T-cell (primary cell): ENCODE measurements at regions of chr1 and their contacts with region 1.

Region 1: DNA sequence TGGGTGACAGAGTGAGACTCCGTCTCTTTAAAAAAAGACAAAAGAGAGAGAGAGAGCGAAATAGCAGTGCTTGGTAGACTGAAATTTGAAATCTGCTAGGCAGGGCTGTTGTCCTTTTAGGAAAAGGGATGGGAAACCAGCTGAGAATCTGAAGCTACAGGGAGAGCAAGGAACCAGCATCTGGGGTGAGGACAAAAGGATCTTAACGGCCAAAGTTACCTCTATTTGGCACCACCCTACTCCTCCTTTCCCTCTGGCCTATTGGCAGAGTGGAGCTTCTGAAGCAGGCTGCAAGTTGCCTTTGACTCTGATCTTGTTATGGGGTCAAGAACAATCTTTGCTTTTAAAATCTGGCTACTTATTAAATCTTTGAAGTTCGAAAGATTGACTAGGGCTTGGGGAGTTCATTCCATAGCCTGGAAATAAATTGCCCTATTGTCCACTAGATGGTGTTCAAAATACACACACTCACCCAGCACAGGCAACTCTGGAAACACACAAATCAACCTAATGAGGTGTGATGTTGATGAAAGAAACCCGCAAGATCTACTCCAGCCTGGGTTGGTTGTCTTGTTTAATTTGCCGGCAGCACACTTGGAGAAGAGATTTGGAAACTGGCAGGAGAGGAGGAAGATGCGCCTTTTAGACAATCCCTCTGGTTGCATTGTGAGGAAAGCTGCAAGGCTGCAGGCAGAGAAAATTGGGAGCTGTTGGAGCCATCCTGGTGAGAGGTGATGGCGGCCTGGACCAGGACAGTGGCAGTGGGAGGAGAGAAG is 16.5 kb upstream of the PARP1 start:
- DNase-seq: peak in 1 of 35 experiments; percentile 62
- ATAC-seq: peak; percentile 52 to 64 (median 60)
- H3K4me3 ChIP-seq: no peak overlapping the region
- H3K4me3 Mint-ChIP-seq: no peak overlapping the region
- H3K27ac ChIP-seq: no peak overlapping the region
- H3K27ac Mint-ChIP-seq: no peak overlapping the region
- H3K4me1 ChIP-seq: peaks cover 11 to 51% of the 10 kb centered on the region in 2 experiments
- H3K4me1 Mint-ChIP-seq: peaks cover 24 to 26% (median 25%) of the 10 kb centered on the region in 3 donors
- H3K27me3 ChIP-seq: peaks cover 0 to 5% of the 10 kb centered on the region in 2 experiments
- H3K27me3 Mint-ChIP-seq: peaks cover 0 to 1% of the 10 kb centered on the region in 2 donors

Region 2: DNA sequence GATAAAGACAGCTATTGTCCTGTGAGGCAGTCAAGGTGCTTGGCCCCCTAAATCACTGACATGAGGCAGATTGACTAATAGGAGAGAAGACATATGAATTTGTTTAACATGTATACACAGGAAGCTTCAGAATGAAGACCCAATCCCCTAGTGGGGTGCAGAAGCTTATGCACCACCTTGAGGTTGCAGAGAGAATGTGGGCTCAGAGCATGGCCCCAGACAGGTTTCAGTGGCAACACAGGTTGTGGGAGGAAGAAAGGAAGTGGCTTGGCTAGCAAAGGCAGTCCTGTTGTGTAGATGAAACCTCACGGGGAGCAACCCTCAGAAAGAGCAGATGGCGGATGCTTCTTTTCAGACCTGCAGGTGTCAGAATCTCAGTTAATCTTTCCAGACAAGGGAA is 20.5 kb after region 1 on chr1:
- CTCF ChIA-PET with region 1: interaction called, 6 to 23 read pairs
- POLR2A ChIA-PET with region 1: interaction called in 1 of 2 experiments, 3 read pairs
- DNase-seq: peak; percentile 44 to 86 (median 69)
- ATAC-seq: peak; percentile 99 to 100 (median 100)
- H3K4me3 ChIP-seq: no peak overlapping the region
- H3K4me3 Mint-ChIP-seq: peak overlapping the region in 1 of 3 donors; percentile 49
- H3K27ac ChIP-seq: peak overlapping the region; percentile 28
- H3K27ac Mint-ChIP-seq: peak overlapping the region; percentile 74 to 89
- H3K4me1 ChIP-seq: peaks cover 28 to 30% of the 10 kb centered on the region in 2 experiments
- H3K4me1 Mint-ChIP-seq: peaks cover 33 to 36% (median 35%) of the 10 kb centered on the region in 3 donors
- H3K27me3 ChIP-seq: no peaks in the 10 kb centered on the region
- H3K27me3 Mint-ChIP-seq: no peaks in the 10 kb centered on the region

Region 3: GRCh38 chr1:226604560-226605317 is 180.3 kb after region 1 on chr1:
- CTCF ChIA-PET with region 1: interaction called in 1 of 2 experiments, 14 read pairs
- POLR2A ChIA-PET with region 1: no interaction called
- DNase-seq: no peak
- ATAC-seq: no peak
- H3K4me3 ChIP-seq: no peak overlapping the region
- H3K4me3 Mint-ChIP-seq: no peak overlapping the region
- H3K27ac ChIP-seq: no peak overlapping the region
- H3K27ac Mint-ChIP-seq: no peak overlapping the region
- H3K4me1 ChIP-seq: peaks cover 0 to 3% of the 10 kb centered on the region in 2 experiments
- H3K4me1 Mint-ChIP-seq: no peaks in the 10 kb centered on the region
- H3K27me3 ChIP-seq: peaks cover 0 to 19% of the 10 kb centered on the region in 2 experiments
- H3K27me3 Mint-ChIP-seq: peaks cover 5 to 9% of the 10 kb centered on the region in 2 donors